PC-3 (cell line): ENCODE measurements at regions of chr1 and their contacts with region 1.

Region 1: DNA sequence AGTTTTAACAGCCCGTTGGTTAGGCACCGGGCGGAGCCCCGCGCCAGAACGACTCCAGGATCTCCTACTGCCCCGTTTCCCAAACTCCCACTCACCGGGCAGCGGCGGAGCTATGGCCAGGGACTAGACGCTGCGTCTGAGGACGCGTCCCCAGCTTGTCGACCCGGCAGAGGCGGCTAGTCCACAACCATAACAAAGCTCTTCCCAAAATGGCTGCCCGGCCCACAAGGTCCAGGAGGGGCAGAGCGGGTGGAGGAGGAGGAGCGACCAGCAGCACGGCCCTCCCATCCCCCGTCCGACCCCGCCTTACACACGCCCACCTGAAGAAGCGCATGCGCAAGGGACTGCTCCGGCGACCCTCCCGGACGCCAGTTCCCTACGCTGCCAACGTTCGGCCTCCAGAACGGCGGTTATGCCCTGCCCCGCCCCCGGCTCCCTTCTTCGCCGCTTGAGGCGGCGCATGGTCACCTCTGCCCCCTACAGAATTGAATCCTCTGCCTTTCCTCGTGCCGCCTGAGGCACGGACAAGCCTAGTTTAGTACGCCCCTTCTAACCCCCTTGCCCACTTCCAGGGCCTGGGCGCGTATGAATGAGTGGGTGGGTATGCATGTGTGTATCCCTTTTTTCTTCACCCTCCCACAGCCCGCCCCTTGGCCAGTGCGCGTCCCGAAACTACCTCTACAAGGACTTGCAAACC is at the start of gene GPBP1L1:
- DNase-seq: peak; percentile 94
- ATAC-seq: peak; percentile 68
- H3K4me3 ChIP-seq: peak within 1 kb of the TSS; percentile 99
- H3K27ac ChIP-seq: peak within 1 kb of the TSS; percentile 98
- H3K4me1 ChIP-seq: peaks cover 22% of the 10 kb centered on the region
- H3K27me3 ChIP-seq: no peaks in the 10 kb centered on the region
- CTCF ChIP-seq: no peak
- total RNA-seq, gene GPBP1L1: 63.0 and 97.7 TPM in 2 replicates

Region 2: DNA sequence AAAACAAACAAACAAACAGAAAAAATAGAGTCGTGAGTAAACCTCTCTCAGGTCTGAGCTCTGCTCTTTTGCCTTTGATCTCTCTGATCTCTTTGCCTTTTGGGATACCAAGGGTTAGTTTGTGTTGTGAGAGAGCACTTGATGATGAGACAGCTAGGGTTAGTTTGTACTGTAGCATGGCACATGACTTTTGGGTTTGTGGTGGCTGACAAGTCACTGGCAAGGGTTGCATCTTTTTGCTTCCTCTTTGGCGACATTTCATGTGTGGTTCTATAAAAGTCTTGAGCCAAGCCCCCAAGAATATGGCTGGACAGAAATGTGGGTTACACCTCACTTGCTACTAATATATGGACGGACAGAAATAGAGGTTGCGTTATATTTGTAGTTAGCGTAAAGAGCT is 256.0 kb before region 1 on chr1:
- CTCF ChIA-PET with region 1: no interaction called
- POLR2A ChIA-PET with region 1: no interaction called
- intact Hi-C with region 1: no loop called
- DNase-seq: no peak
- ATAC-seq: no peak
- H3K4me3 ChIP-seq: no peak overlapping the region
- H3K27ac ChIP-seq: no peak overlapping the region
- H3K4me1 ChIP-seq: no peaks in the 10 kb centered on the region
- H3K27me3 ChIP-seq: no peaks in the 10 kb centered on the region
- CTCF ChIP-seq: no peak

Region 3: DNA sequence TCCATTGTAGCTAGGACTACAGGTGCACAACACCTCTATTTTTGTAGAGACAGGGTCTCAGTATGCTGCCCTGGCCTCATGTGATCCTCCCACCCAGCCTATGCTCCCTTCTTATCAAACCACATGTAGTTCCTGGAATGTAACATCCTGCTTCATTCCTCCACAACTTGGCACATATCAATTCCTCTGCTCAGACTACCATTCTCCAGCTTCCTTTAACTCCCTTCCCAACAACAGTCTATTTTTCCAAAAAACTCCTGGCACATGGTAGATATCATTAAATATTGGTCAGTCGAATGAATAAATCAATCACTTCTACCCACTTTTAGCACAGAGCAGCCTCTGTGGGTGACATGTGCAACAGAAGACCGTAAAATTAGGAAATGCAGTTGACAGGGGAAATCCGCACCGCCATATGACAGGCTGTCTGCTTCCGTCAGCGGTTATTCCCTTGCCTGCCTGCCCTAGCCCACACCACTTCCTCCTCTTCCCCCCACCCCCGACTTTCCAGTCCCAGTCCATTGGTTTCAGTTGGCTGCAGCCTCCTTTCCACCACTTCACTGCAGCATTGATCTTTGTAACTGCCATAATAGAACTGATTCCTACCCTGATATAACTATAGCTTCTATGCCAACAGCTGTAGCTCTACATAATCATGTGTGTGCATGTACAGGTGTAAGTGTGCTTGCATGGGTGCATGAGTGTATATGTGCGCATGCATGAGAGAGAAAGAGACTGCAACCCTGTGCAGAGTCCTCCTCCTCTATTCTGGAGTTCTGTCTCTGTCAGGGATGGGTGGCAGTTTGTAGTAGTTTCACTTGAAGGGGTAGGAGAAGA is 142.7 kb before region 1 on chr1:
- CTCF ChIA-PET with region 1: no interaction called
- POLR2A ChIA-PET with region 1: no interaction called
- intact Hi-C with region 1: no loop called
- DNase-seq: no peak
- ATAC-seq: no peak
- H3K4me3 ChIP-seq: no peak overlapping the region
- H3K27ac ChIP-seq: no peak overlapping the region
- H3K4me1 ChIP-seq: peaks cover 5% of the 10 kb centered on the region; the same call in 1 of the 2 replicates
- H3K27me3 ChIP-seq: no peaks in the 10 kb centered on the region
- CTCF ChIP-seq: no peak

Region 4: DNA sequence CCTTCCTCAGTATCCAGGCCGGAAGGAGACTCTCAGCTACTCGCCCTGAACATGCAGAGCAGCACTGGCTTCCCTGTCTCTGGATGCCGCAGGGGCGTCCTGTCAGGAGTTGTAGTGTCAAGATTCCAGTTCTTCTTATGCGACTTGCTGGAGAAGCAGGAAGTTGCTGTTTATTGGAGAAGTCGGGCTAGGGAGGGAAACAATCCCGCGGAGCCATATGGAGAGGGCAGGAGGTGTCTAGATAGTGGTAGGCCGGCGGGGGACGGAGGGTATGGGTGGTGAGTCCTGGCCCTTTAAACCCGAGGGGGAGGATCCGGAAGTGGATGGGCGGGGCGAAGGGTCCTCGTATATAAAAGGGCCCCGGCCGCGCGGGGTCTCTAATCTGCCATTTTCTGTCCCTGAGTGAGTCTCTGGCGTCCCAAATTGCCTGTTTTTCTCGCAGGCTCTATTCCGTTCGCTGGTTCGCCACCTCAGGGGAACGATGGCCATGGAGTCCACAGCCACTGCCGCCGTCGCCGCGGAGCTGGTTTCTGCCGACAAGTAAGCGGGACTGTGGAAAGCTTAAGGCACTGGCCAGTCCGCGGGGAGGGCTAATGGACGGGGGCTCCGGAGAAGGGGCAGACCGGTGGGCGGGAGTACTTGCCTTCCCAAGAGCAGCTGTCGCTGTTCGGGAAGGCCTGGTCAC is 102.7 kb before region 1 on chr1 and contains the start of gene NASP:
- CTCF ChIA-PET with region 1: no interaction called
- POLR2A ChIA-PET with region 1: no interaction called
- intact Hi-C with region 1: loop called (anchors 2 kb)
- DNase-seq: peak; percentile 80
- ATAC-seq: peak; percentile 68
- H3K4me3 ChIP-seq: peak within 1 kb of the TSS; percentile 91
- H3K27ac ChIP-seq: peak within 1 kb of the TSS; percentile 62
- H3K4me1 ChIP-seq: peaks cover 7% of the 10 kb centered on the region
- H3K27me3 ChIP-seq: no peaks in the 10 kb centered on the region
- CTCF ChIP-seq: 0 out of 2 replicates have a peak, but pooled peaks have one; percentile 25
- total RNA-seq, gene NASP: 119 and 122 TPM in 2 replicates

Region 5: DNA sequence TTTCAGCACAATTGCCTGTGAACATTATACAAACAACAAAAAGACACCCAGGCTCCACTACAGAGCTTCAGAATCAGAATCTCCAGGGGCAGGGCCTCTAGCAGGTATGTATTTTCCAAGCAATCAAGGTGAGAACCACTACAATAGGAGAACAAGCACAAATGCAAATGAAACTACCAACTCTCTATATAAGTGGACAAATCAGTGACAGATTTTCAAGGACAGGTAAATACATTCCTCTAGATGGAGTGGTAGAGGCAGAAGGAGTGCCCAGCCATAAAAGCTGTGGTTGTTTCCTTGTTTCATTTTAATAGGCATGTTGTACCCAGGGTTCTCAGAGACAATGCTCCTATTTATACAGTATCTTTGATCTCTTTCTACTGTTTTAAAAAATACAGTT is 42.5 kb before region 1 on chr1:
- CTCF ChIA-PET with region 1: no interaction called
- POLR2A ChIA-PET with region 1: interaction called, 6 read pairs
- intact Hi-C with region 1: loop called (anchors 5 kb)
- DNase-seq: peak; percentile 43
- ATAC-seq: peak; percentile 95
- H3K4me3 ChIP-seq: no peak overlapping the region
- H3K27ac ChIP-seq: no peak overlapping the region
- H3K4me1 ChIP-seq: no peaks in the 10 kb centered on the region
- H3K27me3 ChIP-seq: no peaks in the 10 kb centered on the region
- CTCF ChIP-seq: peak; percentile 52

Region 6: DNA sequence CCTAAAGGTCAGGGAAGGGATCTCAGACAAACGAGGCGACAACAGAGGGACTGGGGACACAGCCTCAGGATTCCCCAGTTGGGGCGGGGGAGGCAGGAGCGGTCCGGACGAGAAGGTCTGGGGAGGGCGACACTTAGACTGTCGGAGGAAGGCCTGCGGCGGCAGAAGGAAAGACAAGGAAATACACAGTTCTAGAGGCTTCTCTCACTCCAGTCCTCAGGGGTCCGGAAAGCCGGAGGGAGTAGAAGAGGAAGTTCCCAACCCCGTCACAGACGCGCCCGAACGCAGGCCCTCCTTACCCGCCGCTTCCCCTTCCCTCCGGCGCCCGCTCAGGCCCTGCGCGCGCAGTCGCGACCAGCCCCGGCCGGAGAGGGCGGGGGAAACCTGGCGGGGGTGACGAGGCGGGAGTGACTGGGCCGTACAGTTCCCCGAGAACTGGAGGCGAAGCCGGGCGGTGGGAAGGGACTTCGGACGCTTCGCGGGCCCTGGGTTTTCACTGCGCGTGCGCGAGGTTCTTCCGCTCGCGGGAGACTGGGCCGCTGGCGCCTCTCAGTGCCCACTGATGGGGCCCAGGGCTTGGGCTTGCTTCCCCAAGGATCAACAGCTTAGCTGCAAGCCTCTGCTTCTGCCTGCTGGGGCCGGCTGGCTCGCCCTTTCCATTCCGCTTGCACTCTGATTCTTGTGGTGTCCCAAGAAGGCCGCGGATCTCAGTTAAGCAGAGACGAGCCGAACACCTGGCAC is 64.0 kb after region 1 on chr1 and contains the start of gene IPP:
- CTCF ChIA-PET with region 1: no interaction called
- POLR2A ChIA-PET with region 1: no interaction called
- intact Hi-C with region 1: loop called (anchors 1 kb)
- DNase-seq: peak; percentile 98
- ATAC-seq: peak; percentile 98
- H3K4me3 ChIP-seq: peak within 1 kb of the TSS; percentile 93
- H3K27ac ChIP-seq: peak within 1 kb of the TSS; percentile 79
- H3K4me1 ChIP-seq: peaks cover 9% of the 10 kb centered on the region
- H3K27me3 ChIP-seq: no peaks in the 10 kb centered on the region
- CTCF ChIP-seq: no peak
- total RNA-seq, gene IPP: 6.6 and 8.8 TPM in 2 replicates

Region 7: DNA sequence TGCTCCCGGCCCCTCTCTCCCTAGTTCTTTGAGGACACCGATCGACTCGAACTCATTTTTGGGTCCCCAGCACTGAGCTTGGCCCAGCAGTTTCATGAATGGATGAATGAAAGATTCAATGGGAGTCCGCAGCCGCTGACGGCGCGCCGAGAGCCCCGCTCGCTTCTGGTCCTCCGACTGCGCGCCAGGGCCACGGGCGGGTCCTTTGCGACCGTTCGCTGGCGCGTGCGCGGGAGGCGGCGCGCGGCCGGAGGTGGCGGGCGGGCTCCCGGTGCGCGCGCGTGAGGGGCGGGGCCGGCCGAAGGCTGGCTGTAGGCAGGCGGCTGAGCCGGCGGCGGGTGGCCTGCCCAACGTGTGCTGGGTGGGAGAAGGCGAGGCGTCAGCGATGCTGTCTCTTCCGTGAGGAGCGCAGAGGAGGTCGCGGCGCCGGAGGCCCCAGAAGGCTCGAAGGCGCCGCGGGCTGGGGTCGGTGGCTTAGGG is 116.9 kb after region 1 on chr1 and contains the start of gene MAST2:
- CTCF ChIA-PET with region 1: no interaction called
- POLR2A ChIA-PET with region 1: interaction called, 4 read pairs
- intact Hi-C with region 1: loop called (anchors 1 kb)
- DNase-seq: peak; percentile 90
- ATAC-seq: peak; percentile 79
- H3K4me3 ChIP-seq: peak within 1 kb of the TSS; percentile 73
- H3K27ac ChIP-seq: peak within 1 kb of the TSS; percentile 56
- H3K4me1 ChIP-seq: peaks cover 22% of the 10 kb centered on the region
- H3K27me3 ChIP-seq: no peaks in the 10 kb centered on the region
- CTCF ChIP-seq: no peak
- total RNA-seq, gene MAST2: 29.3 and 33.7 TPM in 2 replicates

Region 8: GRCh38 chr1:46132529-46133180 is 446.2 kb after region 1 on chr1 and contains the start of gene PIK3R3:
- CTCF ChIA-PET with region 1: no interaction called
- POLR2A ChIA-PET with region 1: interaction called, 11 read pairs
- intact Hi-C with region 1: no loop called
- DNase-seq: peak; percentile 98
- ATAC-seq: peak; percentile 86
- H3K4me3 ChIP-seq: peak within 1 kb of the TSS; percentile 95
- H3K27ac ChIP-seq: peak within 1 kb of the TSS; percentile 94
- H3K4me1 ChIP-seq: peaks cover 49% of the 10 kb centered on the region
- H3K27me3 ChIP-seq: no peaks in the 10 kb centered on the region
- CTCF ChIP-seq: no peak
- total RNA-seq, gene PIK3R3: 17.7 and 18.5 TPM in 2 replicates